ENCODE measurements at regions of chr15 and their contacts with region 1.

Region 1: DNA sequence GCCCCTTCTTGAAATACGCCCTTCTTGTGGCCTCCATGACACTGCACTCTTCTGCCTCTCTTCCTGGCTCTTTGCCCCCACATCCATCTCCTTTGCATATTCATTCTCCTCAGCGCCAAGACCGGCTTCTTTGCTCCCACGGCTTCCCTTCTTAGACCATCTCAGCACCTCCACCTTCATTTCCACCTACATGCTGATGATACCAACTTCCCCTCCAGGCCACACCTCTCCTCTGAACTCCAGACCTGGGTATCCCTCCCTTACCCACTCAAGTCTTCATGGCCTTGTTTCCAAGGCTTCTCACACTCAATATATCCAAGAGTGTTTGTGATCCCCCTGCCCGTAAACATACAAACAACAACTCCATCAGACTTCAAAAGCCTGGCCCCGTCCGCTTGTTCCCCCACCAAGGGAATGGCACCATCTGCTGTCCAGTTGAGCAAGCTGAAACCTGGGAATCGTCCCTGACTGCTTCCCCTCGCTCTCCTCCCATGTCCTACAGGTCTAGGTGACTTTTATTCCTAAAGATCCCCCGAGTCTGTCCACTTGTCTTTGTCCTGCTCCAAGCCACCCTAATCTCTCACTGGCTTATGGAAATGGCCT is 27.8 kb upstream of the FAM174B start:
- DNase-seq: peak; percentile 46 to 71 (median 59)
- ATAC-seq: peak; percentile 85 to 92 (median 87)
- H3K4me3 ChIP-seq: no peak overlapping the region
- H3K27ac ChIP-seq: no peak overlapping the region
- H3K4me1 ChIP-seq: peaks cover 0 to 3% (median 0%) of the 10 kb centered on the region in 4 donors
- H3K27me3 ChIP-seq: no peaks in the 10 kb centered on the region
- CTCF ChIP-seq: peak; percentile 78 to 92 (median 84)
- POLR2A ChIP-seq: no peak

Region 2: GRCh38 chr15:92521624-92522008 is 161.7 kb before region 1 on chr15:
- intact Hi-C with region 1: loop called in 1 of 2 experiments (anchors 5 kb)
- DNase-seq: peak in 2 of 3 donors; percentile 61 to 80
- ATAC-seq: peak; percentile 99 to 100 (median 99)
- H3K4me3 ChIP-seq: no peak overlapping the region
- H3K27ac ChIP-seq: no peak overlapping the region
- H3K4me1 ChIP-seq: no peaks in the 10 kb centered on the region
- H3K27me3 ChIP-seq: no peaks in the 10 kb centered on the region
- CTCF ChIP-seq: peak; percentile 68 to 90 (median 82)
- POLR2A ChIP-seq: no peak